IMR-90 (cell line): ENCODE measurements at regions of chr19 and their contacts with region 1.

Region 1: DNA sequence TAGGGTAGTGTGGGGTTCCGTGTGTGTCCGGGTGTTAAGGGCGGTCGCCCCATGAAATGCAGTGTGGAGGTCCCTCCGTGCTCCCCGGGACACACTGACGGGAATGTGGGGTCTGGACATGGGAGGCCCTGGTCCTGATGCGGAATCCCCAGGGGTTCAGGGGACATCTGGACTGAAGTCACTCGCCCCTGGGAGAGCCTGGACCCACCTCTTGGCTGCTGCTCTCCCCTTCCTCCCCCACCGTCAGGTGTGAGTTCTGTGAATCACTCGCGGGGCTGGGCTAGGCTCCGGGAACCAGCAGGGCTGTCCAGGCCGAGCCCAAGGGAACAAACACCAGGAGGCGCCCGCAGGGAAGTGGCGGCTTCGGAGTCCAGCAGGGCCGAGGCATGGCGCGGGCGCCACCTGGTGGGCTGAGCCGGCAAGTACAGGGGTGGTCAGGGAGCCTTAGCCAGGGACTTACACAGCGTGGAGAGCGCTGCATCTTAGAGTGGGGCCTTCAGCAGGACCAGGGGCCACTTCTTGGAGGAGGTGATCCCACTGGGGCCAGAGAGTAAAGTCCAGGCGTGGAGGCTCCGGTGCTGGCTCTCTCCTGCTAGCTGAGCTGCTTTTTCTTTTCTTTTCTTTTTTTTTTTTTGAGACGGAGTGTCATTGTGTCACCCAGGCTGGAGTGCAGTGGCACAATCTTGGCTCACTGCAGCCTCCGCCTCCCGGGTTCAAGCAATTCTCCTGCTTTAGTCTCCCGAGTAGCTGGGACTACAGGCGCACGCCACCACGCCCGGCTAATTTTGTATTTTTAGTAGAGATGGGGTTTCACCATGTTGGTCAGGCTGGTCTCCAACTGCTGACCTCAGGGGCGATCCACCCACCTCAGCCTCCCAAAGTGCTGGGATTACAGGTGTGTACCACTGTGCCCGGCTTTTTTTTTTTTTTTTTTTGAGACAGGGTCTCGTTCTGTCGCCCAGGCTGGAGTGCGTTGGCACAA is 20.1 kb downstream of the WTIP start:
- DNase-seq: peak; percentile 86
- ATAC-seq: peak; percentile 98
- H3K4me3 ChIP-seq: no peak overlapping the region
- H3K27ac ChIP-seq: no peak overlapping the region
- H3K4me1 ChIP-seq: peaks cover 7% of the 10 kb centered on the region; the same call in 1 of the 2 replicates
- H3K27me3 ChIP-seq: no peaks in the 10 kb centered on the region
- CTCF ChIP-seq: peak; percentile 100
- POLR2A ChIP-seq: peak; percentile 38; the same call in 1 of the 2 replicates
- RAD21 ChIP-seq: peak; percentile 94

Region 2: DNA sequence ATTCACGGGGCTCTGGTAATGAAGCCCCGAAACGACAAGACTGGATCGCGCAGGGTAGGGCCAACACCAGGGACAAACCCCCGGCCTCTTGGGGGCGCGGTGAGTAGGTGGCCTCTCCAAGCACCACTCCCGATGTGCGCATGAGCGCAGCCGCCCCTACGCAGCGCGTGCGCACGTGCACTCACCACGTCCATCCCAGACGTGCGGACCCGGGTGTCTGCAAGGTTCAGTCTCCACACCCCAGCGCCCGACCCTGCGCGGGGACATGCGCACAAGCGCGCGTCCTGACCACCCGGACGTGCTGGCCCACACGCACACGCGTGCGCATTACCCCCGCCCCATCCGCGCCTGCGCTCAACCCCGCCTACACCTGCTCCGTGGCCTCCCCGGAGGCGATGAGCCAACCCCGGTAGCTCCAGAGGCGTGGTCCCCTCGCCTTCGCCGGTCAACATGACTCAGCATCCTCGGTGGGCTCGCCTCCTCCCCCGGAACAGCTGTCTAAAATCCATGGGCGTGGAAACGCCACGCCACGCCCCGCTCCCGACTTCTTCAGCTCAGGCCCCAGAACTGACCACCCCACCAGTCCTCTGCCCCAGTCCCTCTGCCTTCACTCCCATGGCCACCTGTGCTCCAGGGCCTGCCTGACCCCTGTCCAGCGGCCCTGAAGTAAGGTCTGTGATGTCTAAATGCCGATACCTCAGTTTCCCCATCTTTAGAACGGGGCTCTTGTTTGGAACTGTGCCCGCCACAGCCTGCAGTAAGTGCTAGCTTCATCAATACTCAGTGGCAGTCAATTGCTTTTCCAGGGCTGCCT is 142.3 kb before region 1 on chr19:
- CTCF ChIA-PET with region 1: no interaction called
- POLR2A ChIA-PET with region 1: no interaction called
- dilution Hi-C with region 1: no loop called
- in situ Hi-C with region 1: no loop called
- intact Hi-C with region 1: loop called (anchors 1 kb)
- DNase-seq: peak; percentile 96
- ATAC-seq: peak; percentile 95
- H3K4me3 ChIP-seq: peak overlapping the region; percentile 31
- H3K27ac ChIP-seq: peak overlapping the region; percentile 65
- H3K4me1 ChIP-seq: peaks cover 9% of the 10 kb centered on the region
- H3K27me3 ChIP-seq: no peaks in the 10 kb centered on the region
- CTCF ChIP-seq: peak; percentile 53
- POLR2A ChIP-seq: no peak
- RAD21 ChIP-seq: no peak

Region 3: GRCh38 chr19:34404109-34404897 is 97.3 kb before region 1 on chr19 and contains the start of gene PDCD2L:
- CTCF ChIA-PET with region 1: no interaction called
- POLR2A ChIA-PET with region 1: no interaction called
- dilution Hi-C with region 1: no loop called
- in situ Hi-C with region 1: no loop called
- intact Hi-C with region 1: loop called (anchors 1 kb)
- DNase-seq: peak; percentile 85
- ATAC-seq: peak; percentile 99
- H3K4me3 ChIP-seq: peak within 1 kb of the TSS; percentile 93
- H3K27ac ChIP-seq: peak within 1 kb of the TSS; percentile 59; the same call in 1 of the 2 replicates
- H3K4me1 ChIP-seq: peaks cover 2% of the 10 kb centered on the region; the same call in 1 of the 2 replicates
- H3K27me3 ChIP-seq: no peaks in the 10 kb centered on the region
- CTCF ChIP-seq: no peak
- POLR2A ChIP-seq: no peak
- RAD21 ChIP-seq: 0 out of 2 replicates have a peak, but pooled peaks have one; percentile 13
- total RNA-seq, gene PDCD2L: 10.6 and 12.2 TPM in 2 replicates